HepG2 (cell line): ENCODE measurements at regions of chr2 and their contacts with region 1.

Region 1: GRCh38 chr2:159035790-159036411 is 67.5 kb downstream of the TANC1 start:
- DNase-seq: peak; percentile 83
- ATAC-seq: peak; percentile 100
- H3K4me3 ChIP-seq: no peak overlapping the region
- H3K27ac ChIP-seq: no peak overlapping the region
- H3K4me1 ChIP-seq: peaks cover 14% of the 10 kb centered on the region
- H3K27me3 ChIP-seq: no peaks in the 10 kb centered on the region
- CTCF ChIP-seq: peak; percentile 86
- EP300 ChIP-seq: no peak
- POLR2A ChIP-seq: no peak
- RAD21 ChIP-seq: peak; percentile 84

Region 2: GRCh38 chr2:158616480-158617000 is 419.4 kb before region 1 on chr2:
- CTCF ChIA-PET with region 1: no interaction called
- POLR2A ChIA-PET with region 1: no interaction called
- in situ Hi-C with region 1: no loop called
- intact Hi-C with region 1: no loop called
- DNase-seq: no peak
- ATAC-seq: no peak
- H3K4me3 ChIP-seq: no peak overlapping the region
- H3K27ac ChIP-seq: no peak overlapping the region
- H3K4me1 ChIP-seq: peaks cover 22% of the 10 kb centered on the region
- H3K27me3 ChIP-seq: no peaks in the 10 kb centered on the region
- CTCF ChIP-seq: no peak
- EP300 ChIP-seq: no peak
- POLR2A ChIP-seq: no peak
- RAD21 ChIP-seq: no peak

Region 3: DNA sequence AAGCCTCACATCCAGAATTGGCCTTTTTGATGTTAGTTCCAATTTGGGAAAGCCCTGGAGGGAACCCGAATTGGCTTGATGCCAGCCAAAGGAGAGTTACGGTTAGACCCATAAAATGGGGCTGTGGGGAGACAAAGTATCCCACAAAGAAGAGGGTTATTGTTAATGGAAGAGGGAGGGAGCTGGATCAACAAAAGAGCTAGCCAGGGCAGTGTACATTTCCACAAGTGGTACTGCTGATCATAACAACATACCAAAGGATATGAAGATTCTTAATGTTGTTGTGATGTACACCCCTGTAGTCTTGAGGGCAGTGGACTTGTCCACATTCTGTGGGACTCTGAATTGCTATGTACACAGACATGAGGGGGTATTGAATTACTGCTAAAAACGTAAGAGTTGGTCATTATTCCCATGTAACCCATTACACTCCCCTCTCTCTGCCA is 62.4 kb before region 1 on chr2:
- CTCF ChIA-PET with region 1: no interaction called
- POLR2A ChIA-PET with region 1: no interaction called
- in situ Hi-C with region 1: no loop called
- intact Hi-C with region 1: no loop called
- DNase-seq: no peak
- ATAC-seq: no peak
- H3K4me3 ChIP-seq: no peak overlapping the region
- H3K27ac ChIP-seq: no peak overlapping the region
- H3K4me1 ChIP-seq: peaks cover 27% of the 10 kb centered on the region
- H3K27me3 ChIP-seq: peaks cover 0 to 27% of the 10 kb centered on the region in 2 experiments; a peak in 3 of 5 replicates
- CTCF ChIP-seq: no peak
- EP300 ChIP-seq: no peak
- POLR2A ChIP-seq: no peak
- RAD21 ChIP-seq: no peak

Region 4: DNA sequence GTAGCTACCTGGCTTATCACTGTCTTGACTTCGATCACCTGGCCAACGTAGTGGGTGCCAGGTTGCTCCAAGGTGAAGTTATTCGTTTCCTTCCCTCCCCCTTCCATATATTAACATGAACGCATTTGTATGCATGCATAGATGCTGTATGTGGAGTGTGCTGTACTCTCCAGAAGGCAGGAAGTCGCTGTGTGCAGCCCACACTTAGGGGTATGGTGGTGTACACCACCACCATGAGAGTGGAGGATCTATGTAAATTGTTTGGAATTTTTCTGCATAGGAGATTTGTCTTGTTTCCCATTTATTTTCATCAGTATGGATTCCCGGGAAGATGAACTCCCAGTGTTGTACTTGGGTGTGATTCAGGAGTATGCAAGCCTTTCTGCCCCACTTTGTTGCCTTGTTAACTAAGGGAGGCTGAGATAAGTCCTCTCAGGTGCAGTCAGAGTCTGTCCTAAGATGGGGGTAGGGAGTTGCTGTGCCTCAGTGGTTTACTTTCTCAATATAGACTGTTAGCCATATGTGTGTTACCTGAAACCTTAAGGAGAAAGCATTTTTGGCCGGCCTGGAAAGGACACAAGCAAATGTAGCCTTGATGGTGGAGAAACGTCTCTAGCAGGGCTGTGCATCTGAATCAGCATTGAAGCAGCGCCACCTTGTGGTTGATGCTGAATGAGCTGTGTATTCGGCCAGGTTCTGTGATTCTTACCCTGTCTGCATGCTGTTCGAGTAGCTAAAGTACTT is 82.4 kb after region 1 on chr2:
- CTCF ChIA-PET with region 1: interaction called, 18 read pairs
- POLR2A ChIA-PET with region 1: interaction called, 6 read pairs
- in situ Hi-C with region 1: loop called (anchors 10 kb)
- intact Hi-C with region 1: loop called (anchors 1 kb)
- DNase-seq: peak; percentile 68
- ATAC-seq: peak; percentile 97
- H3K4me3 ChIP-seq: no peak overlapping the region
- H3K27ac ChIP-seq: no peak overlapping the region
- H3K4me1 ChIP-seq: no peaks in the 10 kb centered on the region
- H3K27me3 ChIP-seq: no peaks in the 10 kb centered on the region
- CTCF ChIP-seq: peak; percentile 97
- EP300 ChIP-seq: no peak
- POLR2A ChIP-seq: no peak
- RAD21 ChIP-seq: peak; percentile 94

Region 5: GRCh38 chr2:159968279-159968900 is 932.5 kb after region 1 on chr2:
- CTCF ChIA-PET with region 1: no interaction called
- POLR2A ChIA-PET with region 1: no interaction called
- in situ Hi-C with region 1: no loop called
- intact Hi-C with region 1: loop called (anchors 2 kb)
- DNase-seq: peak; percentile 31
- ATAC-seq: peak; percentile 89
- H3K4me3 ChIP-seq: no peak overlapping the region
- H3K27ac ChIP-seq: no peak overlapping the region
- H3K4me1 ChIP-seq: no peaks in the 10 kb centered on the region
- H3K27me3 ChIP-seq: no peaks in the 10 kb centered on the region
- CTCF ChIP-seq: peak; percentile 75
- EP300 ChIP-seq: no peak
- POLR2A ChIP-seq: no peak
- RAD21 ChIP-seq: peak; percentile 52; the same call in 1 of the 2 replicates